Activated CD4-positive, alpha-beta T cell treated with anti-CD3 and anti-CD28 coated beads, Interleukin-2, amount 10 ng/mL, durations not matched to agents 24 days and 14 days (primary cell): ENCODE measurements at regions of chr12 and their contacts with region 1.

Region 1: GRCh38 chr12:27498149-27498548 is 25.9 kb upstream of the PPFIBP1 start:
- DNase-seq: peak; percentile 70
- H3K4me3 Mint-ChIP-seq: peak overlapping the region; percentile 34
- H3K27ac Mint-ChIP-seq: peak overlapping the region; percentile 47
- H3K4me1 Mint-ChIP-seq: peaks cover 46% of the 10 kb centered on the region
- H3K27me3 Mint-ChIP-seq: peaks cover 25% of the 10 kb centered on the region

Region 2: GRCh38 chr12:27474344-27474743 is 23.8 kb before region 1 on chr12:
- intact Hi-C with region 1: no loop called
- DNase-seq: peak; percentile 36
- H3K4me3 Mint-ChIP-seq: no peak overlapping the region
- H3K27ac Mint-ChIP-seq: no peak overlapping the region
- H3K4me1 Mint-ChIP-seq: peaks cover 28% of the 10 kb centered on the region
- H3K27me3 Mint-ChIP-seq: no peaks in the 10 kb centered on the region

Region 3: DNA sequence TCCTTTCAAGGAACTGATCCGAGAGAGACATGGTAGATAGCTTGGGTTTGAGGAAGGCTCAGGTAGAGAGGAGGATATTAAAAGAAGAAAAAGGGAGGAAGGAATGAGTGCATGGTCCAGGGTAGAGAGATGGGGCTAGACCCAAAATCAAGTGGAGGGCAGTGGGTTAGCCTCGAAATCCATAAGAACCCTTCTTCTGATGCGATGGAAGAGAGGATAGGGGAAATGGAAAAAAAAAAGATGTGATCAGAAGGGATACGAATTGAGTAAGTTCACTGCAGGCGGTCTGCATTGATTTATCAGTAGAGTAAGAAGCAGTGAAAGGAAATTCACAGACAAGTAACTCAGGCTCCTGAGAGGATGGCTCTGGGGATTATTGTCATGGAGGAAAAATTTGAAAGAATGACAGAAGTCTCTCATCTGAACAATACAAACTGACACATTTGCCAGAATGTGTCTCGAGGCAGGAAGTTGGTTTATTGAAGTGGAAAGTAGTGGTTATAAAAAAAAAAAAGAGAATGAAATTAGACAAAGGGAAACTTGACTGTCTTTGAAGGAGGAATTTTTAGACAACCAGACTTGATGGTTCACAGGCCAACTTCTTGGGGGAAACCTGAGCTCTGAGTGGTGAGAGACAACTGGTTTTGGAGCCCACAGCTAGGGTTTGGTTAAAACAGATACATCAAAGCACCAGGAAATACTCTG is 36.1 kb after region 1 on chr12:
- intact Hi-C with region 1: loop called (anchors 1 kb)
- DNase-seq: peak; percentile 78
- H3K4me3 Mint-ChIP-seq: peak overlapping the region; percentile 58
- H3K27ac Mint-ChIP-seq: peak overlapping the region; percentile 68
- H3K4me1 Mint-ChIP-seq: peaks cover 33% of the 10 kb centered on the region
- H3K27me3 Mint-ChIP-seq: peaks cover 5% of the 10 kb centered on the region